ENCODE measurements at regions of chr14 and their contacts with region 1.

Region 1: GRCh38 chr14:38867561-38868150 is 235.4 kb downstream of the SEC23A start:
- DNase-seq: peak in 1 of 2 experiments; percentile 45
- H3K4me3 ChIP-seq: no peak overlapping the region
- H3K27ac ChIP-seq: no peak overlapping the region
- H3K4me1 ChIP-seq: peaks cover 7% of the 10 kb centered on the region; the same call in 1 of the 2 replicates
- H3K27me3 ChIP-seq: no peaks in the 10 kb centered on the region
- CTCF ChIP-seq: peak; percentile 80

Region 2: GRCh38 chr14:37903343-37904191 is 964.1 kb before region 1 on chr14:
- CTCF ChIA-PET with region 1: no interaction called
- POLR2A ChIA-PET with region 1: no interaction called
- intact Hi-C with region 1: loop called (anchors 1 kb)
- DNase-seq: peak in 1 of 2 experiments; percentile 1
- H3K4me3 ChIP-seq: no peak overlapping the region
- H3K27ac ChIP-seq: no peak overlapping the region
- H3K4me1 ChIP-seq: no peaks in the 10 kb centered on the region
- H3K27me3 ChIP-seq: no peaks in the 10 kb centered on the region
- CTCF ChIP-seq: peak; percentile 84

Region 3: GRCh38 chr14:38197784-38198335 is 669.8 kb before region 1 on chr14:
- CTCF ChIA-PET with region 1: no interaction called
- POLR2A ChIA-PET with region 1: no interaction called
- intact Hi-C with region 1: no loop called
- DNase-seq: no peak
- H3K4me3 ChIP-seq: no peak overlapping the region
- H3K27ac ChIP-seq: no peak overlapping the region
- H3K4me1 ChIP-seq: no peaks in the 10 kb centered on the region
- H3K27me3 ChIP-seq: no peaks in the 10 kb centered on the region
- CTCF ChIP-seq: no peak

Region 4: DNA sequence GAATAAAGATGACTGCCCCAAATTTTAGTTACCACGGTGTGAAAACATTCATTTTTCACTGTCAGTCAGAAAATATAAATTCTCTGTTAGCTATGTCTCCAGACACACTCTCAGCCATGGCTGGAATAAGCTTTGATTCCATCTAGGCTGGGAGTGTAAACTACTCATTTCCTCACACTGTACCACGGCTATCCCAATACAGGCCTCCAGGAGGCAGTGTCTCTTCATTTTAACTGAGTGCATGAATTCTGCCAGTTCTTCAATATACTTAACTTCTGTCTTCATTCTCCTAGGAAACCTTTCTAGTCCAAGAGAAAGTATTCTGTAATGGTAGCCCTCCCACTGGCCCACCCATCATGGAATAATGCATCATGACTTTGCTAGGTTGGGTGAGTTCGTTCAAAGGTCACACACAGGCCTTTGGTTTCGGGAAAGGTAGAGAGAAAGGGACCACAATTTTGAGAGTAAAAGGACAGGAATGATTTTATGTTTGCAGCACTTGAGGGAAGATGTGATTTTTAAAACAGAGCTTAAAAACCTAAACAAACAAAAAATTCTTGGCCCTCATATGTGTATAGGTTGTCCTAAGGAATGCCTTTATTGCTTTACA is 145.7 kb before region 1 on chr14:
- CTCF ChIA-PET with region 1: interaction called, 3 read pairs
- POLR2A ChIA-PET with region 1: no interaction called
- intact Hi-C with region 1: loop called (anchors 1 kb)
- DNase-seq: peak in 1 of 2 experiments; percentile 29
- H3K4me3 ChIP-seq: no peak overlapping the region
- H3K27ac ChIP-seq: no peak overlapping the region
- H3K4me1 ChIP-seq: no peaks in the 10 kb centered on the region
- H3K27me3 ChIP-seq: no peaks in the 10 kb centered on the region
- CTCF ChIP-seq: peak; percentile 75